Mucosa of descending colon (tissue), 3 donors: ENCODE measurements at regions of chr3 and their contacts with region 1.

Region 1: GRCh38 chr3:192816351-192816750 is 89.0 kb upstream of the FGF12 start:
- DNase-seq: peak in 1 of 3 donors; percentile 23
- ATAC-seq: no peak
- H3K4me3 ChIP-seq: no peak overlapping the region
- H3K4me1 ChIP-seq: no peaks in the 10 kb centered on the region
- CTCF ChIP-seq: no peak

Region 2: DNA sequence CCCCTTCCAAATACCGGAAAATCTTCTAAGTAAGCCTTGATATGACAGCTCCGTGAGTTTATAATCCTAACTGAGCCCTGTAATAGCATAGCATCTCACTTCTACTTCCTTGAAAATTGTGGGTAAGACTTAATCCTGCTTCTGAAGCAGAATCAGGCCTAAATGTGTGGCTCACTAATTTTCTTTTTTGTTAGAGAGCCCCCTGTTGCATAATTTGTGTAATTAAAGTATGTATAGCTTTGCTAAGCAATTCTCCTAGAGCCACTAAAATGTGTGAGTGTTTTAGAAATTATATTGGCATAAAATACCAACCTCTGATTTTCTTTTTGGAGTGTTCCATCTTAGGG is 393.4 kb before region 1 on chr3:
- intact Hi-C with region 1: no loop called
- DNase-seq: no peak
- ATAC-seq: no peak
- H3K4me3 ChIP-seq: no peak overlapping the region
- H3K4me1 ChIP-seq: no peaks in the 10 kb centered on the region
- CTCF ChIP-seq: no peak

Region 3: DNA sequence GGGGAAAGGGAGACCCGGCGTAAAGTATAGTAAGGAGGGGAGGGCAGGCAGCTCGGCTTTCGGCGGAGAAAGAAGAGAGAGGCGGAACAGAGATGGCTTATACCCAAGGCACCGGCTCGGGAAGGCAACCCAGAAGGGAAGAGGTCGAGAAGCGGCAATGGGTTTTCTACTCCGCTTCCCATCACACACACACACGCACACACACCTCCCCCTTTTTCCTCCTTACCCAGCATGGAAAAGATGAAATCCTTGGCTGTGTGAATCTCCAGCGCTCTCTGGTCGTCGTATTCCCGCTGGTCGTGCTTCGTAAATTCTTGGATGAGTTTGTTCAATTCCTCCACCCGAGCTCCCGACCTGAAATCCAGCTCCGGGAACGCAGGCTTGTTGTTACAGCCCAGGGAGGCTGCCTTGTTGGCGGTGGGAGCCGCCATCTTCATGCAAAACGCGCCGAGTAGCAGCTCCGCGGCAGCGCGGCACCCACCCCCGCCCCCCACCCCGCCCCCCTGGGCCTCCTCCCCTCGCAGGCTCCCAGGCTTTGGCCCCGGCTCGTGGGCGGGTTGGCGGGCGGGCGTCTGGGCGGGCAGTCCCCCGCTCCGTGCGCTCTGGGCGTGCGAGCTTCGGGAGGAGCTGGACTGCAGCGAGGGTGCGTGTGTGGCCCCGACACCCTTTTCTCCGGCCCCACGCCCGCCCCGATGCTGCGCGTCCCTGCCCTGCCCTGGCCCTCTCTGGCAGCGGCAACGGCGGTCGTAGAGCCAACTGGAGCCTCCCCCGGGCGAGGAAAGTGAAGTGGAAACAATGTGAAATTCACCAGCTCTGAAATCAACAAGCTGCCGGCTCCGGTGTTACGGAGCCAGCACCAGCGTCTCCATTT is 101.3 kb after region 1 on chr3 and contains the start of gene MB21D2:
- intact Hi-C with region 1: loop called (anchors 10 kb)
- DNase-seq: peak; percentile 70 to 82 (median 79)
- ATAC-seq: peak; percentile 85
- H3K4me3 ChIP-seq: peak within 1 kb of the TSS; percentile 58
- H3K4me1 ChIP-seq: peaks cover 6% of the 10 kb centered on the region
- CTCF ChIP-seq: no peak
- total RNA-seq, gene MB21D2: 1.9 to 4.0 (median 2.7) TPM

Region 4: DNA sequence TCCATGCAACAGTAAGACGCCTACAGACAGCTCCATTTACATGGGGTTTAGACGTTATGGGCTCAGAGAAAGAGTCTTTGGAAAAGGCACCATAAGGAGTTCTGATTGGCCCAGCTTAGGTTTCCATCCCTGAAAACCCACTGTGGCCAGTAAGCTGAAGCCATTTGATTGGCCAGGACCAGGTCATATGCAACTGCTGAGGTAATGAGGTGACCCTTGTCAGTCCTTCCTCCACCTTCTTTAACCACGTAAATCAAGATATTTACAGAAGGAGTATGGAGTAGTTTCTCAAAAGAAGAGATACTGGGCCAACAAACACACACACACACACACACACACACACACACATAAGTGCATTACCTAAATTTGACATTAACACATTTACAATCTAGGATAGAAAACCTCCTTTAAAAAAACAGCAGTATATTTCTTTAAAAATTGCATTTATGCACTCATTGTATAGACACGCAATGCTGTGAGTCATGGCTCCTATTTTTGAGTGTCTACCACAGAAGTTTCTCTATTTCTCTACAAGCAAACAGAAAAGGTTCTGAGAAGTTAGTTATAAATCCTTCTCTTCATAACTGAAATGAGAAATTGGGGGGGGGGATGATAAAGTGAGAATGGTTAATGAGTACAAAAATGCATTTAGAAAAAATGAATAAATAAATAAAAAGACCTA is 117.6 kb after region 1 on chr3:
- intact Hi-C with region 1: no loop called
- DNase-seq: no peak
- ATAC-seq: no peak
- H3K4me3 ChIP-seq: no peak overlapping the region
- H3K4me1 ChIP-seq: no peaks in the 10 kb centered on the region
- CTCF ChIP-seq: no peak

Region 5: GRCh38 chr3:193030276-193030675 is 213.9 kb after region 1 on chr3:
- intact Hi-C with region 1: loop called in 1 of 2 experiments (anchors 10 kb)
- DNase-seq: no peak
- ATAC-seq: no peak
- H3K4me3 ChIP-seq: no peak overlapping the region
- H3K4me1 ChIP-seq: no peaks in the 10 kb centered on the region
- CTCF ChIP-seq: no peak

Region 6: DNA sequence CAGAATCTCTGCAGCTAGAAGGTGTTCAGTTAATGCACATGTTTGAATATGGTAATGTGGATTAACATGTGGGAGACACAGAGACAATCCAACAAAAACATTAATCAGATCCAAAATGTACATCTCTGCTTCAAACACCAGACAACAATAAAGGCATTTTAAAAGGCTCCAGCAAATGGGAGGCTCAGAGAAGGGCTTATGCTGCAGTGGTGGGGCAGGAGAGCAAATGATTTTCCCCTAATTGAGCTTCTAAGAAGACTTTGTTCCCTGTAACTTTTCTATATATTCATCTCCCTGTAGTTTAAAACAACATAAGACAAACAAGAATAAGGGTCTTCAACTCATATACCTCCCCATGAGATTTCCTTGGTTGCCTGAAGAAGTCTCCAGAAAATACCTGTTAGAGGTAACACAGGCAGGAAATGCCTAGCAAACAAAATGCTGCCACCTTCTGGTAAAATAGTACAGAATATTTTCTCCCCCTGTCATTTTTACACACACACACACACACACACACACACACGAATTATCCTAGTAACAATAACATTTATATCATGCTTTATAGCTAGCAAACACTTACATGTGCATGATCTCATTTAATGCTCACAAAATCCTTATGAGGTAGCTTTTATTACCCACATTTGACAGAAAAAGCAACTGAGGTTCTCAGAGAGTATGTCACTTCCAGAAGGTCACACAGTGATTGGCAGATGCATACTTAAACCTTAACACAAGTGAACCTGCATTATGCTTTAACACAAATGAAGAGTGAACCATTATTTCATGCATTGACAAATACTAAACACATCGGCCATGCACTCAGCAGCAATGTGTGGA is 224.7 kb after region 1 on chr3:
- intact Hi-C with region 1: loop called (anchors 2 to 10 kb)
- DNase-seq: peak in 1 of 3 donors; percentile 4
- ATAC-seq: peak; percentile 57
- H3K4me3 ChIP-seq: no peak overlapping the region
- H3K4me1 ChIP-seq: no peaks in the 10 kb centered on the region
- CTCF ChIP-seq: peak; percentile 15

Region 7: GRCh38 chr3:193572426-193572908 is 756.1 kb after region 1 on chr3:
- intact Hi-C with region 1: loop called in 1 of 2 experiments (anchors 10 kb)
- DNase-seq: peak in 1 of 3 donors; percentile 68
- ATAC-seq: peak; percentile 86
- H3K4me3 ChIP-seq: no peak overlapping the region
- H3K4me1 ChIP-seq: no peaks in the 10 kb centered on the region
- CTCF ChIP-seq: peak; percentile 38